Activated CD8-positive, alpha-beta T cell treated with anti-CD3 and anti-CD28 coated beads, Interleukin-2, amount 10 ng/mL, durations not matched to agents 7 days and 5 days (primary cell): ENCODE measurements at regions of chr17 and their contacts with region 1.

Region 1: GRCh38 chr17:8949061-8949661 is 16.3 kb downstream of the PIK3R5 start:
- DNase-seq: no peak
- ATAC-seq: peak; percentile 52
- H3K4me3 Mint-ChIP-seq: peak overlapping the region; percentile 22
- H3K27ac Mint-ChIP-seq: peak overlapping the region; percentile 64
- H3K4me1 Mint-ChIP-seq: peaks cover 93% of the 10 kb centered on the region
- H3K27me3 Mint-ChIP-seq: no peaks in the 10 kb centered on the region

Region 2: GRCh38 chr17:8960325-8961140 is 11.4 kb after region 1 on chr17:
- CTCF ChIA-PET with region 1: interaction called, 28 read pairs
- POLR2A ChIA-PET with region 1: interaction called, 29 read pairs
- DNase-seq: no peak
- ATAC-seq: no peak
- H3K4me3 Mint-ChIP-seq: peak overlapping the region; percentile 38
- H3K27ac Mint-ChIP-seq: peak overlapping the region; percentile 65
- H3K4me1 Mint-ChIP-seq: peaks cover 88% of the 10 kb centered on the region
- H3K27me3 Mint-ChIP-seq: no peaks in the 10 kb centered on the region